Heart left ventricle (tissue), 16 donors: ENCODE measurements at regions of chr2 and their contacts with region 1.

Region 1: GRCh38 chr2:99489761-99490622 is at the start of gene REV1:
- DNase-seq: peak; percentile 95 to 96 (median 96)
- ATAC-seq: peak; percentile 90 to 94 (median 92)
- H3K4me3 ChIP-seq: peak within 1 kb of the TSS; percentile 57 to 95 (median 81)
- H3K27ac ChIP-seq: peak within 1 kb of the TSS; percentile 93 to 99 (median 97)
- H3K4me1 ChIP-seq: peaks cover 0 to 45% (median 23%) of the 10 kb centered on the region in 12 donors
- H3K27me3 ChIP-seq: no peaks in the 10 kb centered on the region
- CTCF ChIP-seq: peak; percentile 58 to 88 (median 78)
- POLR2A ChIP-seq: peak in 1 of 2 donors; percentile 49
- total RNA-seq, gene REV1: 24.7 to 76.1 (median 32.8) TPM

Region 2: DNA sequence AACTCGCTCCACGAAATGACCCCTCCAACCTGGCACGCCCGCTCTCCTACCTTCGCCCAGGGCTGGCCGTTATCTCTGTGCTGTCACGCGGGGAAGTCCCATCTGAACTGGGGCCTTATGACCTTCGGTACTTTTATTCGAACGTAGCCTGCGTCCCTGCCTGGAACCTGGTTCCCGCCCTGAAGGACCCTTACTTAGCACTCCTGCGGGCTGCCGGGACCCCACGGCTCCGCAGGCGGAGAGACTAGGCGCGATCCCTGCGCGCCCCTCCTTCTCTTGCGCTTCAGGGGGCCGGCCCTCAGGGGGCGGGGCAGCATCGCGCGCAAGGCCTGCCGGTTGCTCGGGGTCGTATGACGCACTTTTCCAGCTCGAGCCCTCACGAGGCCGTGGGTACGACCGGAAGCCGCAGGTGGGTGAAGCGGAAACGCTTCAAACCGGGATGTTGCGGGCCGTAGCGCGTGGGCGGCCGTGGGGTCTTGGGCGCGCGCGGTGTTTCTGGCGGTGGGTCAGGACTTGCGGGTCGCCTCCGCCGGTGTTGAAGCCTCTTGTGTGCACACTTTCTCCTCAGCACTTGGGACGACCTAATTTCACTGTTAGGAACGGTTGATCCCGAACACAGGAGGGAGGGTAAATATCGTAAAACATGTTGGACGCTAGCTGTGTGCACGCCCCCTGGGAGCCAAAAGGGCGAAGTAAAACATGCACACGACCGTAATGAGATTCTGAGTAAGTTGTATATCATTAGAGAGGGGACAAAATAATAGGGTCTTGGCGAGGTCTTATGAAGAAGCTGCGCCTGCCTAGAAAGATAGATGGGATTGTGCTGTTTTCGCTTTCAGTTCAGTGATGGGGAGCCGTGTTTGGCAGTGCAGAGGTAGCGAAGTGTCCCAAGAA is 335.1 kb before region 1 on chr2 and contains the starts of genes LIPT1 and TSGA10:
- intact Hi-C with region 1: loop called in 2 of 10 experiments (anchors 10 kb)
- DNase-seq: peak; percentile 93 to 95 (median 94)
- ATAC-seq: peak; percentile 98 to 99 (median 99)
- H3K4me3 ChIP-seq: peak within 1 kb of the TSS; percentile 51 to 84 (median 72)
- H3K27ac ChIP-seq: peak within 1 kb of the TSS; percentile 45 to 93 (median 90)
- H3K4me1 ChIP-seq: peaks cover 0 to 27% (median 16%) of the 10 kb centered on the region in 12 donors
- H3K27me3 ChIP-seq: no peaks in the 10 kb centered on the region
- CTCF ChIP-seq: peak in 4 of 12 donors; percentile 10 to 19 (median 15)
- POLR2A ChIP-seq: peak; percentile 21 to 83
- total RNA-seq, gene LIPT1: 5.3 to 10.9 (median 7.5) TPM
- total RNA-seq, gene TSGA10: 1.3 to 63.7 (median 2.9) TPM

Region 3: DNA sequence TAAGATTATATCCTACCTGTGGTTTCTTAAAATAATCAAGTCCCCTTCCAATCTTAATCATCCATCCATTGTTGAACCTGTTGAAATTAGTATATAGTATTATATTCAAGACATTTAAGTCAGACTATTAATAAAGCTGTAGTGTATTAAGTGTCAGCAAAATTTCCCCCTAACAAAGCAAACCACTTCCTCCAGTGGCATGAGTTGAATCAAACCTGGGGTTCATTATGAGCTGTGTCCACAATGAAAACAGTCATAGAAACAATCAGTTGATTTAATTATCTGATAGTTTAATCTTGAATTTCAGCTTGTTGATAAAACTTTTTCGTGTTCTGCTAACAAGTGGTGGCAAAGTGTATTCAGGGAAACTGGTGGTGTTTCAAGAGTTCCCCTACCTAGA is 320.5 kb before region 1 on chr2:
- intact Hi-C with region 1: loop called in 2 of 10 experiments (anchors 10 kb)
- DNase-seq: no peak
- ATAC-seq: no peak
- H3K4me3 ChIP-seq: no peak overlapping the region
- H3K27ac ChIP-seq: no peak overlapping the region
- H3K4me1 ChIP-seq: no peaks in the 10 kb centered on the region
- H3K27me3 ChIP-seq: no peaks in the 10 kb centered on the region
- CTCF ChIP-seq: no peak
- POLR2A ChIP-seq: no peak

Region 4: DNA sequence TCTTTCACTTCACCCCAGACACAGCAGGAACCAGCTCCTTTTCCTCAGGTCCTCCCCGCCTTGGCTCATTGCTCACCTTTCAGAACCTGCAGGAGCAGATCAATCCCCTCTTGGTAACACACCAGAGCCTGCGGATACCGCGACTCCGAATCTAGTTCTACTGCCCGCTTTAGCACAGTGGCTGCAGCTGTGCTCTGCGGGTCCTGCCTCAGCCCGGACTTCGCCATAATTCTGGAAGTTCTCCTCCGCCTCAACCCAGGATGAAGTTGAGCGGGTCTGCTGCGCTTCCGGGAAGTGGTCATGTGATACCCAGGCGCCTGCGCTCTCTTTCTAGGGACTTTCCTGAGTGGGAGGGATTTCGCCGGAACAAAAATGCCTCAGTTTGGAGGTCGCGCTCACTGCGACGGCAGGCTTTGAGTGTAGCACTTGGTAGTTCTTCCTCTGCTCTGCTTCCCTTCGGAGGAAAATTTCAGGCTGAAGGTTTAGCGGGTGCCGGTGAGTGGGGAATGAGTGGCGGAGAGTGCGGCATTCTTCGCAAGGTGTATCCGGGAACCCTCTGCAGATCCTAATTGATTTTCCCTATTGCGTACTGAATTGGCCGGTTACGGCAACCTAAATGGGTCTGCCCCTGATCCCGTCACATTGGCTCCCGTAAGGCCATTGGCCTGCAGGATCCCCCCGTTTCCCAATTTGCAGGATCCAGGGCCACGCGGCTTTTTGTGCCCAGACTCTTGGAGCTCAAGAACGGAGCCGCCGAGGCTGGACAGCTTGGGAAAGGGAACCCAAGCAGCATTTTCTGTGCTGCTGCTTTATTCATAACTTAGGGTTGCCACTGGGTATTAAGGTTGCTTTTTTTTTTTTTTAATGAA is 309.0 kb before region 1 on chr2 and contains the starts of genes MITD1 and MRPL30:
- intact Hi-C with region 1: loop called in 4 of 10 experiments (anchors 10 kb)
- DNase-seq: peak; percentile 92 to 94 (median 93)
- ATAC-seq: peak; percentile 98 to 99 (median 98)
- H3K4me3 ChIP-seq: peak within 1 kb of the TSS; percentile 66 to 92 (median 80)
- H3K27ac ChIP-seq: peak within 1 kb of the TSS in 11 of 12 donors; percentile 57 to 92 (median 78)
- H3K4me1 ChIP-seq: peaks cover 4 to 56% (median 28%) of the 10 kb centered on the region in 12 donors
- H3K27me3 ChIP-seq: no peaks in the 10 kb centered on the region
- CTCF ChIP-seq: no peak
- POLR2A ChIP-seq: peak in 1 of 2 donors; percentile 77
- total RNA-seq, gene MITD1: 8.4 to 16.4 (median 14.0) TPM
- total RNA-seq, gene MRPL30: 26.4 to 38.3 (median 34.3) TPM

Region 5: DNA sequence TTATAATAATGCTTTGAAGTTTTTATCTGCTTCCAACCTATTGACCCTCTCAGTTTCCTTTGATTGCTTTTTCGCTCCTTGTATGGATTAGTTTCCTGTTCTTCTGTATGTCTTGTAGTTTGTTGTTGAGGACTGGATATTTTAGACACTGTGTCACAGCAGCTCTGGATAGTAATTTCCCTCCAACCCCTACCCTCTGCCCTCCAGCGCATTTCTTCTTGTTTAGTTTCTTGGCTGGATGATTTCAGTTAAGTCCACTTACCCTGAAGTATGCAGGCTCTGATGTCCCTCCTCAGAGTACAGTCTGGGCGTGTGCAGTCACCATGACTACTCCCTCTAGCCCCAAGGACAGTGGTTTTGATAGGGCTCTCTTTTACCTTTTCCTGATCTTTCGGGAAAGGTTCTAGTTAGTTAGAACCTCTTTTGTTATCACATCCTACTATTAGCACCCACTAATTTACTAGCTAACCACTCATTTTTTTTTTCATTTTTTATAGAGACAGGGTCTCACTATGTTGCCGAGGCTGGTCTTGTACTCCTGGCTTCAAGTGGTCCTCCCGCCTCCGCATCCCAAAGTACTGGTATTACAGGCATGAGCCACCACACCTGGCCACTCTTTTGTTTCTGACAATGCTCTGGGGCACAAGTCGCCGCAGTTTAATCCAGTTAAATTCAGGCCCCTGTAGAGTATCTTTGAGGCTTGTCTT is 172.7 kb before region 1 on chr2:
- intact Hi-C with region 1: no loop called
- DNase-seq: no peak
- ATAC-seq: no peak
- H3K4me3 ChIP-seq: no peak overlapping the region
- H3K27ac ChIP-seq: no peak overlapping the region
- H3K4me1 ChIP-seq: no peaks in the 10 kb centered on the region
- H3K27me3 ChIP-seq: no peaks in the 10 kb centered on the region
- CTCF ChIP-seq: no peak
- POLR2A ChIP-seq: no peak

Region 6: GRCh38 chr2:99337113-99338028 is 152.6 kb before region 1 on chr2 and contains the start of gene EIF5B:
- intact Hi-C with region 1: loop called in 9 of 10 experiments (anchors 1 to 10 kb)
- DNase-seq: peak; percentile 96 to 99 (median 98)
- ATAC-seq: peak; percentile 89 to 94 (median 92)
- H3K4me3 ChIP-seq: peak within 1 kb of the TSS; percentile 48 to 96 (median 82)
- H3K27ac ChIP-seq: peak within 1 kb of the TSS; percentile 76 to 97 (median 92)
- H3K4me1 ChIP-seq: peaks cover 3 to 61% (median 36%) of the 10 kb centered on the region in 12 donors
- H3K27me3 ChIP-seq: no peaks in the 10 kb centered on the region
- CTCF ChIP-seq: peak; percentile 36 to 95 (median 74)
- POLR2A ChIP-seq: peak in 1 of 2 donors; percentile 59
- total RNA-seq, gene EIF5B: 56.1 to 165 (median 86.8) TPM

Region 7: DNA sequence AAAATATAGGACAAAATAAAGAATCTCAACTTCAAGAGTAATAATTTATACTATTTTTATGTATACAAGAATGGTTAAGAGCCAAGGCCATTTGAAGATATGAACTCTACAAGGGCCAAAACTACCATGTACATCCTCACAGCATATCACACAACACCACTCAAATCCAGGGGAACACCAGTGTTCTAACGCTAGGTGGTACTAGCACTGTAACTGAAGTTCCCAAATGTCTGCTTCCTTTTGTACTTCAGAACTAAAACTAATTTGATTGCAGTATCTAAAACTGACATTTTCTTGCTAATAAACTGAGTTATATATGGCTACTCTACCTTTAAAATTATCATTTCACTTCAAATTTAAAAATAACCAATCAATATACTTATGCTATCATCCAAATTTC is 47.2 kb before region 1 on chr2:
- intact Hi-C with region 1: loop called in 8 of 10 experiments (anchors 1 to 5 kb)
- DNase-seq: no peak
- ATAC-seq: peak in 2 of 4 donors; percentile 77 to 83
- H3K4me3 ChIP-seq: no peak overlapping the region
- H3K27ac ChIP-seq: no peak overlapping the region
- H3K4me1 ChIP-seq: peaks cover 0 to 13% (median 4%) of the 10 kb centered on the region in 12 donors
- H3K27me3 ChIP-seq: no peaks in the 10 kb centered on the region
- CTCF ChIP-seq: peak; percentile 17 to 65 (median 46)
- POLR2A ChIP-seq: no peak

Region 8: DNA sequence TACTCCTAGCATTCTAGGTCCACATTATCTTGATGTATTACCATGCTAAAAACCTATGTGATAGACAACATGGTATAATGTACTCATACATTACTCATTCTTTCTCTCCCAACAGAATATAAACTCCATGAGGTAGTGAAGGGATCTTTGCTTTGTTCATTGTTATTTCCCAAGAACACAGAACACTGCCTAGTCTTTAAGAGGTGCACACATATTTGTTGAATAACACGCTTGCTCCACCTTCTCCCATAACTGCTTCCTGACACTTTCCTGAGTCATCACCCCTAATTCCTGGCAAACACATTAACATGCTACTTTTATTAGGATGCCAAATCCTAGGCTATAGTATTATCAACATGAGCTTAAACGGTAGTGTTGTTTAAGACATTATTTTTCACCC is 41.4 kb before region 1 on chr2:
- intact Hi-C with region 1: loop called in 8 of 10 experiments (anchors 1 to 5 kb)
- DNase-seq: no peak
- ATAC-seq: no peak
- H3K4me3 ChIP-seq: no peak overlapping the region
- H3K27ac ChIP-seq: no peak overlapping the region
- H3K4me1 ChIP-seq: peaks cover 0 to 29% (median 10%) of the 10 kb centered on the region in 12 donors
- H3K27me3 ChIP-seq: no peaks in the 10 kb centered on the region
- CTCF ChIP-seq: no peak
- POLR2A ChIP-seq: no peak

Region 9: DNA sequence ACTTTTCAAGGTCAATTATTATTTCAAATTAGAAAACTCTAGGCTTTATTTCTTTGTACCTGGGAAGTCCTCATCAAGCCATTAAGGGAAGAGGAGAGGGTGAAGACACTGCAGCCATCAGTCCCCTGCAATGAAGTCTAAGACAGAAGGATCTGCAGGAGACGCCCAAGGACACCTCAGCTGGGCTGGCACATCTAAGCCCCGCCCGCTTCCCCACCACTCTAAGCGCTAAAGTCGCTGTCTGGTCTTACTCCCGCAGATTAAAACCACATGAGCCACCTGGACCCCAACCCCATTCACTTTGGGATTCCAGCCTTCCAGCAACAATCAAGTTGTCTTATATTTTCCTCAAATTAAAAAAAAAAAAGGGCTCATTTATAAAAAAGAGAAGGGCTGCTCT is 548.0 kb after region 1 on chr2:
- intact Hi-C with region 1: no loop called
- DNase-seq: no peak
- ATAC-seq: no peak
- H3K4me3 ChIP-seq: no peak overlapping the region
- H3K27ac ChIP-seq: no peak overlapping the region
- H3K4me1 ChIP-seq: peaks cover 0 to 7% (median 1%) of the 10 kb centered on the region in 12 donors
- H3K27me3 ChIP-seq: no peaks in the 10 kb centered on the region
- CTCF ChIP-seq: no peak
- POLR2A ChIP-seq: no peak